AG04449 (cell line): ENCODE measurements at regions of chr1 and their contacts with region 1.

Region 1: DNA sequence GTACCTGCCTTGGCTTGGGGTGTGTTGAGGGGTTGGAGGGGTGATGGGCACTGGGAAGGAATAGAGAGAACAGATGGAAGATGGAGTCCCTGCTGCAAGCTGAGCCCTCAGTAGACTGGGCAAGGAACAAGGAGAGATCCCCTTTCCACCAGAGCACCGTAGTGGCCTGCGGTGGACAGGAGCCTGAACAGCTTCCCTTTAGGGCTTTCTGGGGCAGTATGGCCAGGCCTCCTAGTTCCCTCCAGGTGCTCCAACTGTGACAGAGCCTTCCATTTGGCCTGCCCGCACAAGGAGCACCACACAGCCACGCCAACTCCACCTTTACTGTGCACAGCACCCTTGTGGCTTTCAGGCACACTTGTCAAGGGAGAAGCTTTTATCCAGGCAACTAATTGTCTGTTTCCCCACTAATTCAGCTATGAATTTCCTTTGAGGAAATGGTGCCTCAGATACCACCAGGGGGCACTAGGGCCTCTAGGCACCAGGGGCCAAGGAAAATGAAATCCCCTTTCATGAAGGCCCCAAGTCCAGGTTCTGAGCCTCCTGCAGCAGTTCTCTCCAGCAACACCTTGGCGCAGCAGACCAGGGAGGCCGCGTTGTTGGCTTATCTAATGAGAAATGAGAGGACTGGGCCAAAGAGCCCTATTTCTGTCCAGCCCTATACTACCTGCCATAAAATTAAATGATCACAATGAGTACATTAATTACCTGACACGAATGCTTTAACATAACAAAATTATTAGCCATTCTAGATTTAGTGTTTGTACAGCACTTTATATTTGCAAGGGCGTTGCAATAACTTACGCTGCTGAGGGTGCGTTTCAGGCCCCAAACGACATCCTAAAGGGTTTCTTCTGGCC is 23.1 kb upstream of the ERI3 start:
- DNase-seq: no peak
- H3K4me3 ChIP-seq: no peak overlapping the region
- CTCF ChIP-seq: peak; percentile 72

Region 2: GRCh38 chr1:44390277-44390676 is 12.1 kb after region 1 on chr1:
- CTCF ChIA-PET with region 1: interaction called, 15 read pairs
- POLR2A ChIA-PET with region 1: no interaction called
- DNase-seq: peak; percentile 59
- H3K4me3 ChIP-seq: no peak overlapping the region
- CTCF ChIP-seq: no peak

Region 3: GRCh38 chr1:44646261-44647110 is 268.3 kb after region 1 on chr1:
- CTCF ChIA-PET with region 1: interaction called, 67 read pairs
- POLR2A ChIA-PET with region 1: no interaction called
- DNase-seq: no peak
- H3K4me3 ChIP-seq: no peak overlapping the region
- CTCF ChIP-seq: no peak

Region 4: DNA sequence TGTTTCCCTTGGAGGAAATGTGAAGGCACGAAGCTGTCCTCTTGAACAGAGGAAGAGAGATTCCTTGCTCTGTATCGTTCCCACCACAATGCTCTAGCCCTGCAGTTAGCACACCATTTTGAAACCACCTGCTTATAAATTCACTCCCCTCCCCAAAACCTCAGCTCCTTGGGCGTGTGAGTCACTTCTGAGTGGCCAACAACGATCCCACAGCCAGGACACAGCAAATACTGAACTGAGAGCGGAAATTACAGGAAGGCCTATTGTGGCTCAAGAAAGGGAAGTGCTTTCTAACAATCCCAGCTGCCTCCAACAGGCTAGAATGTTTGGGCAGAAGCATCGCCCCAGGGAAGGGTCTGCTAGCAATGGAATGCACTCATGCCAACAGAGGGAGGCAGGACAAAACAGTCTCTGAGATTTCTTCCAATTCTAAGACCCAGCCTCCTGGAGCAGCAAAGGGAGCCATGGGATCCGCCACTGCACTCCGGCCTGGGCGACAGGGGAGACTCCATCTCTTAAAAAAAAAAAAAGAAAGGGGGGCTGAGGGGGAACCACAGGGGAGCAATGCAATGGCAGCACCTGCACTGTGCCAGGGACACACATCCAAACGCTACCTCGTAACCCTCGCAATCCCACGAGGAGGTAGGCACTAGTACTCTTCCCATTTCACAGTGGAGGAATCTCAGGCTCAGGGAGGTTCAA is 294.2 kb after region 1 on chr1:
- CTCF ChIA-PET with region 1: no interaction called
- POLR2A ChIA-PET with region 1: no interaction called
- DNase-seq: no peak
- H3K4me3 ChIP-seq: no peak overlapping the region
- CTCF ChIP-seq: no peak